ENCODE measurements at regions of chr3 and their contacts with region 1.

Region 1: DNA sequence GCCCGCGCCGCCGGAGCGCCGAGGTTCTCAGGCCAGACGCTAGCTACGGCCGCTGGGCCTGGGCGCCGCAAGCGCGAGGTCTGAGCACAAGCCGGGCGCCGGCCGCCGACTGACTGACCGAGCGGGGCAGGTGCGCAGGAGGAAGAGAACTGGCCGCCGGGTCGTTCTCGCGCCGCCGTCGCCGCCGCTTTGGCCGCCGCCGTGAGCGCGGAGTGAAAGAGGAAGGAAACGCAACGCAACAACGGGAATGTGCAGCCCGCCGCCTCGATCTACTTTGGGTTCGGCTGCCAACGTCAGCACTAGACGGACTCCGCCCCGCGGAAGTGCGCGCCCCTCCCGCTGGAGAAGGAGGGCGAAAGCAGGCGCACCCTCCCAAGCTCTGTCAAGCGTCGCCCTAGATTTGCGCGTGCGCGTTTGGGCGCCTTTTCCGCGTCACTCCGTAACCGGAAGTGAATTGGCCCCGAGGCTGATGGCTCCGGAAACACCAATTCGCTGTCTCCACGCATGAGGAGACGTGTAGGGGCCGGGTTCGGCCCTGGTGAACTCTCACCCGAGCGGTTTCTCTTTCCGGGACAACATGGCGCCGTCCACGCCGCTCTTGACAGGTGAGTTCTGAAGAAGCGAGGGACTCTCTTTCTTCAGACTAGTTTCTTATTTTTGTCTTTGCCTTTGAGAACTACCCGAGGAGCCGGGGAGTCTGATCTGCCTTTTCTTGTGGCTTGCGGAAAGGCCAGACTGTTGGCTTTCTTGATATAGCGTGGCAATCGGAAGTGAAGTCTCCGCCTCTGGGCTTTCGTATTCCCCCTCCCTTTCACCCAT is at the starts of genes EIF2A and SERP1:
- DNase-seq: peak; percentile 99
- ATAC-seq: peak; percentile 92
- H3K4me3 Mint-ChIP-seq: peak within 1 kb of the TSS; percentile 90
- H3K27ac Mint-ChIP-seq: peak within 1 kb of the TSS; percentile 96
- H3K4me1 Mint-ChIP-seq: peaks cover 68% of the 10 kb centered on the region
- H3K27me3 Mint-ChIP-seq: no peaks in the 10 kb centered on the region
- total RNA-seq, gene EIF2A: 119 to 182 TPM
- total RNA-seq, gene SERP1: 84.6 to 96.1 TPM

Region 2: DNA sequence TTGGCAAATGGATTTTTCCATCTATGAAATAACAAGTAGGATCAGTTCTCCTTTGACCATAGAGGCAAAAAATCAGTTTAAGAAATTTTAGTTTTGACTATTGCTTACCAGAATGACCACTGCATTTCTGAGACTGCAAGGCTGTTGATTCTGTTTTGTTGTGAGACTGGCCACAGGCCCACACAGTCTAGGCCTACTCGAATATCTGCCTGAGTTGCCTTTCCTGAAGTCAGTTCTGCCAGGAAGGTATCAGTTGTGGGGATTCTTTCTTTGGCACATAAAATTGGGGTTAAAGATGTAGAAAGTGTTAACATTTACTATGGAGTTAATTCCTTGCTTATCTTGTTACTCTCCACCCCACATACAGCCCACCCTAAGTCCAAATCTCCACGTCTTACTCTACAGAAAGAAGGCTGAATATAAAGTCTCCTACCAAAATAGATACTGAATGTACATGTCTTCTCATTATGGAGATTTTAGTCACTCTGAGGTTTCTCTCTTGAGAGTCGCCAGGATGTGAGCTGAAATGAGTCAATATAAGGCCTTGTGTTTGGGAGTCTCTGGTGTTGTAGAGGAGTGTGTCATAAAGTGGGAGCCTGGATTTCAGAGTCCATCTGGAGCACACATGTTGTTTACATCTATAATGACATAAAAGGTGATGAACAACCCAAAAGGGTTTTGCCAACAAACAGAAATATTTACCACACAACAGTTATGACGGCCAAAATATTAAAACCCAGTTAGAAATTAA is 843.6 kb before region 1 on chr3:
- CTCF ChIA-PET with region 1: no interaction called
- POLR2A ChIA-PET with region 1: no interaction called
- intact Hi-C with region 1: loop called in 1 of 2 experiments (anchors 5 kb)
- DNase-seq: peak; percentile 15
- ATAC-seq: peak; percentile 66
- H3K4me3 Mint-ChIP-seq: no peak overlapping the region
- H3K27ac Mint-ChIP-seq: peak overlapping the region; percentile 61
- H3K4me1 Mint-ChIP-seq: peaks cover 23% of the 10 kb centered on the region
- H3K27me3 Mint-ChIP-seq: no peaks in the 10 kb centered on the region

Region 3: DNA sequence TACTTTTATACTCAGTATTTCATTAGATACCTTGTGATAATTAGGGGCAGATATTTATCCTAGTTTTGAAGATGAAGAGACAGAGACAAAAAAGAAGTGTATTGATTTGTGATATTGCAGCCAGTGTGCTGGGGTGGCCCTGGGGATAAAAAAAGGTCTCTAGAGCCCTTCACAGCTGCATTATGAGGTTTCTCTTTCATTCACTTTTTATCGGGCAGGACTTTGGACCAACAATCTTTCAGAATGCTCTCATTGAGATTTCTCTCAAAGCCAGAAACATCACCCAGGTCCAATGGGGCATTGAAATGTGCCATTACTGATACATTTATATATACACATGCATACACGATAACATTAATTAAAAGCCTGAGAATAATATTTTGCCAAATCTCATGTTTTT is 36.2 kb after region 1 on chr3:
- CTCF ChIA-PET with region 1: interaction called, 6 read pairs
- POLR2A ChIA-PET with region 1: no interaction called
- intact Hi-C with region 1: loop called in 1 of 2 experiments (anchors 5 kb)
- DNase-seq: no peak
- ATAC-seq: peak; percentile 23
- H3K4me3 Mint-ChIP-seq: no peak overlapping the region
- H3K27ac Mint-ChIP-seq: peak overlapping the region; percentile 76
- H3K4me1 Mint-ChIP-seq: peaks cover 11% of the 10 kb centered on the region
- H3K27me3 Mint-ChIP-seq: no peaks in the 10 kb centered on the region

Region 4: GRCh38 chr3:150703299-150704134 is 157.1 kb after region 1 on chr3 and contains the start of gene ERICH6:
- CTCF ChIA-PET with region 1: interaction called, 3 read pairs
- POLR2A ChIA-PET with region 1: no interaction called
- intact Hi-C with region 1: loop called (anchors 1 to 2 kb)
- DNase-seq: peak; percentile 93
- ATAC-seq: peak; percentile 96
- H3K4me3 Mint-ChIP-seq: peak within 1 kb of the TSS; percentile 87
- H3K27ac Mint-ChIP-seq: peak within 1 kb of the TSS; percentile 91
- H3K4me1 Mint-ChIP-seq: peaks cover 31% of the 10 kb centered on the region
- H3K27me3 Mint-ChIP-seq: no peaks in the 10 kb centered on the region
- total RNA-seq, gene ERICH6: 0.58 TPM in 1 of 2 experiments, not detected in the other

Region 5: DNA sequence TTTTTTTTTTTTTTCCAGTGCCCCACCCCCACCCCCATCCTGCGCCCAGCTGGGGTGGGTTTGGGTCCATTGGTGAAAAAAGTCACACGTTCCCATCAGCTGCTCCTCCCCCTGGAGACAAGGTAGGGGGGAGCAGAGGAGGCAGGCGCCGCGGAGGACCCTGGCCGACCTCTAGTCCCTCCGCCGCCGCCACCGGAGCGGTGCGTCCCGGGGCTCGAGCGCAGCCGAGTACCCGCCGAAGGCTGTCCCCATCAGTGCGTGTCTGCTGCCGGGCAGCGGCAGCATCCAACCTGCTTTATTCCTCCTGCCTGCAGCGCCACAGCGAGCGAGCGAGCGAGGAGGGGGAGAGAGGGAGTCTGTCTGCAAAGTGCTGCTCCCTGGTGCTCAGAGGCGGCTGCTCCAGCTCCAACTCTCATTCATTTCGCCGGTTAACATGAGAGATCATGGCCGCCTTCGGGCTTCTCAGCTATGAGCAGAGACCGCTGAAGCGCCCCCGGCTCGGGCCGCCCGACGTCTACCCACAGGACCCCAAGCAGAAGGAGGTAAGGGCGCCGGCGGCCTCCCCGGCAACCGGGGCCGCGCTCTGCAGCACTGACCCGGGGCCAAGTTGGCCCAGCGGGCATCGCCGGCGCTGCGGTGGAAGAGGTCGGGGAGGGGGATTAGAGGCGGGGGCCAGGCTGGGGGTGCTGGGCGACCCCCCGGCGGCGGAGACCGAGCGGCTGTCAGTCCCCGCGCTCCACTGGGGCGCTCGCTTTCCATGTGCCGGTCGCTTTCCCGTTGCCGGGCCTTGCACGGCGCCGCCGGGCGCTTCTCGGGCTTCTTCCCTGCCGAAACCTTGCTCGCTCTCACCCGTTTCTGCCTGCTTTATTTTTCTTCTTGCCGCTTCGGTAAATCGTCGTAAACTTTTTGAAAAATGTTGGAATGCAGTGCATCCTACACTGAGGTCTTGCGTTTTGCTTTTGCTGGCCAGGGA is 540.3 kb after region 1 on chr3:
- CTCF ChIA-PET with region 1: no interaction called
- POLR2A ChIA-PET with region 1: no interaction called
- intact Hi-C with region 1: loop called in 1 of 2 experiments (anchors 1 kb)
- DNase-seq: peak; percentile 89
- ATAC-seq: peak; percentile 91
- H3K4me3 Mint-ChIP-seq: peak overlapping the region; percentile 77
- H3K27ac Mint-ChIP-seq: peak overlapping the region; percentile 13
- H3K4me1 Mint-ChIP-seq: peaks cover 10% of the 10 kb centered on the region
- H3K27me3 Mint-ChIP-seq: peaks cover 36% of the 10 kb centered on the region

Measured in activated CD4-positive, alpha-beta T cell treated with anti-CD3 and anti-CD28 coated beads for 36 hours (primary cell).